Posterior vena cava (tissue), 2 donors: ENCODE measurements at regions of chrX and their contacts with region 1.

Region 1: DNA sequence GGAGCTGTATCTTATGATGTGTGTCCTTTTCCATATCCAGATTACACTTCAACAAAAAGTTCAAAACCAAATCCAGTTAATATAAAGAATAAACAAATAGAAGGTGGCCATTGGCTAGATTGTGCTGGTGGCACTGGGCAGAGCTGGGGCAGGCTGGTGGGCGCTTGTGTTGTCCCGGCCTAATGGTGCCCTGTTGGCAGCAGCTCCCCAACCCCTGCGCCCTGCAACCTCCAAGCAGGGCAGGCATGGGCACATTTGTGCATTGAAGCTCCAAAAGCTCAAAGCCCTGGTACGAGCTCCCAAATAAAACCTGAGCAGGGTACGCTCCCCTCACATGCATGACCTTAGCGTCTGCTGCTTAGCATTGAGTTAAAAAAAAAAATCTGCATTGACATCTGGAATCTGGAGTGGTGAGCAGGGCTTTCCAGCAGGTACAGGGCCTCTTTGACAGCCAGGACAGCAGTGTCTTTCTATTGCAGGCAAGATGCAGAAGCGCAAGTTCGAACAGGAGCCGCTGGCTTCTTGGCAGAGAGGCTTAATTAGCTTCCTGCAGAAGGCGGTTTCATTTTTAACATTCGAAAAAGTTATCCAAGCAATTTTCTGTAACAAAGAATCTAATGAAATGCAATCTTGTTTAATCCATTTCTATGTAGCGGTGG is 25.9 kb upstream of the NYX start:
- DNase-seq: no peak

Region 2: DNA sequence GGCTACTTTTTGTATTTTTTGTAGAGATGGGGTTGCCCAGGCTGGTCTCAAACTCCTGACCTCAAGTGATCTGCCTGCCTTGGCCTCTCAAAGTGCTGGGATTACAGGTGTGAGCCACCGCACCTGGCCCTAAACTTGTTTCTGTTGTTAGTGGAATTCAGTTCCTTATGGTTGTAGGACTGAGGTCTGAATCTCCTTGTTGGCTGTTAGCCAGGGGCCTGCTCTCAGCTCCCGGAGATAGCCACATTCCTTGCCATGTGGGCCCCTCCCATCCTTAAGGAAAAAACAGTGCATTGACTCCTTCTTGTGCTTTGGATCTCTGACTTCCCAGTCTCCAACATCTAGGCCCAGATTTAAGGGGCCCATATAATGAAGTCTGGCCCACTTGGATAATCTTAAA is 23.4 kb before region 1 on chrX:
- intact Hi-C with region 1: loop called in 1 of 2 experiments (anchors 1 kb)
- DNase-seq: no peak

Region 3: GRCh38 chrX:41459714-41460113 is 38.5 kb after region 1 on chrX:
- intact Hi-C with region 1: no loop called
- DNase-seq: no peak

Region 4: DNA sequence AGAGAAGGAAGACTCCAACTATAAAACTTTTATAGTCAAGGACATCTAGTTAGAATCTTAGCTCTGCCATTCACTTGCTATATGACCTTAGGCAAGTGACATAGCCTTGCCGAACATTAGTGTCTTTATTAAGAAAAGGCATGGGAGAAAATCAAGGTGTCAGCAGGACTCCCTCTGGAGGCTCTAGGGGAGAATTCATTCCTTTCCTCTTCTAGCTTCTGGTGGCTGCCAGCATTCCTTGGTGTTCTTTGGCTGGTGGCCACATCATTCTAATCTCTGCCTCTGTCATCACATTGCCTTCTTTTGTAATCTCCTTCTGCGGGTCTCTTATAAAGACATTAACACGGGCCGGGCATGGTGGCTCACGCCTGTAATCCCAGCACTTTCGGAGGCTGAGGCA is 1256.9 kb after region 1 on chrX:
- intact Hi-C with region 1: no loop called
- DNase-seq: no peak